Aorta (tissue), 5 donors: ENCODE measurements at regions of chr9 and their contacts with region 1.

Region 1: GRCh38 chr9:108565651-108566378 is 290.0 kb downstream of the ACTL7B start:
- DNase-seq: peak in 1 of 2 donors; percentile 53
- ATAC-seq: peak; percentile 89
- H3K4me3 ChIP-seq: no peak overlapping the region
- H3K27ac ChIP-seq: no peak overlapping the region
- H3K4me1 ChIP-seq: no peaks in the 10 kb centered on the region
- H3K27me3 ChIP-seq: no peaks in the 10 kb centered on the region

Region 2: GRCh38 chr9:107465467-107466451 is 1100.1 kb before region 1 on chr9:
- intact Hi-C with region 1: loop called (anchors 1 to 5 kb)
- DNase-seq: peak; percentile 79 to 91
- ATAC-seq: peak; percentile 98
- H3K4me3 ChIP-seq: peak overlapping the region; percentile 1 to 47
- H3K27ac ChIP-seq: no peak overlapping the region
- H3K4me1 ChIP-seq: no peaks in the 10 kb centered on the region
- H3K27me3 ChIP-seq: no peaks in the 10 kb centered on the region

Region 3: DNA sequence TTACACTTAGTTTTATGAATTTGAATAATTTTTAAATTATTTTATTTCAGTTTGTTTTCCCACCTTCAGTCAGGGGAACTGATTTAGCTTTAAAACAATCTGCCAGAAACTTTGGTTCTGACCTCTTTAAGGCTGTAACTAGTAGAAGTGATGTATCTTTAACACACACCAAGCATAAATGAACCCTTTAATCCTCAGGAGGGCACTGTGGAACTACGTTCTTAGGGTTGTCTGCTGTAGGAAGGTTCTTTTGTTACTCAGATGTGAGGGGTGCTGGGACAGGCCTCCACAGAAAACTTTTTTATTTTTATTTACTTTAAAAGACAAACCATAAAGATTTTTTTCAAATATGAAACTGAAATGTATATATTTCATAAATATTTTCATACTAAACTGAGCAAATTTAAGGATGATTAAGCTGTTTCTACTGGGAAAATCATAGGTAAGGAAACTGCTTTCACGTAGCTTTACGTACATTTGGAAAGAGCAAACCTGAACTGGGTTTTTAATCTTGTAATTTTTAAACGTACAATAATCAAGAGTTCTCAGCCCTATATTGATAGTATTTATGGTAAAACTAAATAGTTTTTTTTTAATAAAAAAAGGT is 1081.6 kb before region 1 on chr9:
- intact Hi-C with region 1: loop called (anchors 5 kb)
- DNase-seq: no peak
- ATAC-seq: no peak
- H3K4me3 ChIP-seq: no peak overlapping the region
- H3K27ac ChIP-seq: no peak overlapping the region
- H3K4me1 ChIP-seq: no peaks in the 10 kb centered on the region
- H3K27me3 ChIP-seq: no peaks in the 10 kb centered on the region

Region 4: GRCh38 chr9:108412755-108413154 is 153.1 kb before region 1 on chr9:
- intact Hi-C with region 1: loop called (anchors 5 to 10 kb)
- DNase-seq: no peak
- ATAC-seq: no peak
- H3K4me3 ChIP-seq: no peak overlapping the region
- H3K27ac ChIP-seq: no peak overlapping the region
- H3K4me1 ChIP-seq: no peaks in the 10 kb centered on the region
- H3K27me3 ChIP-seq: no peaks in the 10 kb centered on the region

Region 5: DNA sequence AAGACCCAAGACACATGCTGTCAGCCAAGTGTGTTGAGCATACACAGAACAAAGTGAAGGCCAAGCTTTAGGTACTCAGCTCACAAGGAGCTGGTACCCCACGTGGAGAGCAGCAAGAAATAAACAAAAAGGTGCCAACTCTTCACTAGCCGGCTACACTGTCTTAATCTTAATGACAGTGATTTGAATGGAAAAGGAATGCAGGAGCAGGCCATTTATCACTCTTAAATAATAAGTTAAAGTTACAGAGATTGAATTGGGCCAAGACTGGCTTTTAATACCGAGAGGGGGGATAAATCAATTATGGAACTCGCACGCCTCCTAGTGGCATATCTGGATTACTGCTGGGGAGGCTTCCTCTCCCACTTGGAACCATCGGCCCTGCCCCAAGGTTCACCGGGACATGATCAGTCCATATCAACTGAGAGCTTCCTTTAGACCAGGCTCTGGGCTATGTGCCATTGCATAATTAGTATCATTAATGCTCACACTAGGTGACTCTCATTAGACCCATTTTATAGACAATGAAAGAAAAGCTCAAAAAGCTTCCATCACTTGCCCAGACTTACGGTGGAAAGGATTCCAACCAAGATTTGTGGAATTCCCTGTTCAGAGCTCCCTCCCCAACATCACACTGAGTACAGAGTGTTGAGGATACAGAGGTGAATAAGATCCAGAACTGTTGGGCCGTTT is 196.0 kb after region 1 on chr9:
- intact Hi-C with region 1: loop called in 1 of 2 experiments (anchors 10 kb)
- DNase-seq: peak; percentile 57 to 80
- ATAC-seq: peak; percentile 85
- H3K4me3 ChIP-seq: no peak overlapping the region
- H3K27ac ChIP-seq: no peak overlapping the region
- H3K4me1 ChIP-seq: no peaks in the 10 kb centered on the region
- H3K27me3 ChIP-seq: no peaks in the 10 kb centered on the region

Region 6: DNA sequence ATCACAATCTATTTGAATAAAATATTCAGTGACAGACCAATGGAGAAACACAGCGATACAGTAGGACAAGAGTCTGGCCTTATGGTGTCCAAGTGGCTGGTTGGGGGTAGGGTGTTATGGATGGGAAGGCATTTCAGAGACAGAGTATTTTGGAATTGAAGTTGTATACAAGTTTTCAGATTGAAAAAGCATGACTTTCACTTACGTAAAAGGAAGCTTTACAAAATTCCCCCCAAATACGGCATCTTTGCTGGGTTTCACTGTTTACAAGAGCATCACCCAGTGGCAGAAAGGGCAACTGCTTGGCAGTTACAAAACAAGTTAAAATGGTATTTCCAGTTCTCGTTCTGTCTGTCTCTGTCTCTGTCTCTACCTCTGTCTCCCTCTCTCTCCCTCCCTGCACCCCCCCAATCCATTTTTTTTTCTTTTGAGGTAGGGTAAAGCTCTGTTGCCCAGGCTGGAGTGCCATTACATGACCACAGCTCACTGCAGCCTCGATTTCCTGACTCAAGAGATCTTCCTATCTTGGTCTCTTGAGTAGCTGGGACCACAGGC is 846.1 kb after region 1 on chr9:
- intact Hi-C with region 1: no loop called
- DNase-seq: no peak
- ATAC-seq: no peak
- H3K4me3 ChIP-seq: no peak overlapping the region
- H3K27ac ChIP-seq: no peak overlapping the region
- H3K4me1 ChIP-seq: no peaks in the 10 kb centered on the region
- H3K27me3 ChIP-seq: no peaks in the 10 kb centered on the region